ENCODE measurements at regions of chr17 and their contacts with region 1.

Region 1: GRCh38 chr17:75589012-75589918 is 1.7 kb downstream of the MYO15B start:
- DNase-seq: peak; percentile 95 to 97
- H3K4me3 ChIP-seq: peak overlapping the region; percentile 68
- H3K4me3 Mint-ChIP-seq: peak overlapping the region; percentile 69
- H3K27ac Mint-ChIP-seq: no peak overlapping the region
- H3K4me1 ChIP-seq: peaks cover 14% of the 10 kb centered on the region
- H3K4me1 Mint-ChIP-seq: no peaks in the 10 kb centered on the region
- H3K27me3 ChIP-seq: no peaks in the 10 kb centered on the region
- H3K27me3 Mint-ChIP-seq: no peaks in the 10 kb centered on the region
- CTCF ChIP-seq: peak; percentile 60 to 70

Region 2: DNA sequence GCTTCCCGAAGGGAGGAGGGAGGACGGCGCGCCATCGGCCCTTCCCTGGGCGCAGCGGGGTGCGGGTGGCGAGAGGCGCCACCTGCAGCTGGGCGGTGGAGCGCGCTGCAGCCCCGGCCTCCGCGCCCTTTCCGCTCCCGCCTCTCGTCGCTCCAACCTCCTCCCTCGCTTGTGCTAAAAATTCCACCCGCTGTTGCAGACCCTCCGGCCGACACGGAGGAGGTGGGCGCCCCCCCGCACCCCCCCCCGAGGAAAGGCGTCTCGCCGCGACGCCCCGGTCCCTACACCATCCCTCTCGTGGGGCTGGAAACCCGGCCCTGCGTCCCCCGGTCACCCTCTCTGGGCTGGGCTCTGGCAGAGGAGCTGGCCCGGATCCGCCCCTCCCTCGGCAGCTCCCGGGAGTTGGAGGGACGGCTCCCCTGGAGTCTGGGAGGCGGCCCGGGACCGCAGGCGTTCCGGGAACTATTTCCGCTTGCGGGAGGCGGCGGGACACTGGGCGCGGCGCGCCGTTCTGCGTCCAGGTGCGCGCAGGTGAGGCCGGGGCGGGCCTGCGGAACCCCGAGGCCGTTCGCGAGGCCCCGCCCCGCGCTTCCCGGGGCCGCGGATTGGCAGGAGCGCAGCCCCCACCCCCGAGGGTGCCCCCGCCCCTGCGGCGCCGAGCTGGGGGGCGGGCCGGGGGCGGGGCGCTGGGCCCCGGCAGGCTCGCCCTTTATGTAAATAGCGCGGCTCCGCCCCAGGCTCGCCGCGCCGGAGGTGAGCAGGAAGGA is 64.1 kb before region 1 on chr17 and contains the start of gene LLGL2:
- CTCF ChIA-PET with region 1: interaction called, 4 read pairs
- POLR2A ChIA-PET with region 1: interaction called, 3 read pairs
- intact Hi-C with region 1: loop called (anchors 5 kb)
- DNase-seq: peak; percentile 95 to 98
- H3K4me3 ChIP-seq: peak within 1 kb of the TSS; percentile 68
- H3K4me3 Mint-ChIP-seq: peak within 1 kb of the TSS; percentile 92
- H3K27ac Mint-ChIP-seq: peak within 1 kb of the TSS; percentile 76
- H3K4me1 ChIP-seq: peaks cover 5% of the 10 kb centered on the region; the same call in 1 of the 2 replicates
- H3K4me1 Mint-ChIP-seq: peaks cover 16% of the 10 kb centered on the region
- H3K27me3 ChIP-seq: no peaks in the 10 kb centered on the region
- H3K27me3 Mint-ChIP-seq: no peaks in the 10 kb centered on the region
- CTCF ChIP-seq: peak; percentile 47 to 54
- total RNA-seq, gene LLGL2: 165 and 179 TPM in 2 replicates

Region 3: GRCh38 chr17:75536371-75536770 is 52.9 kb before region 1 on chr17:
- CTCF ChIA-PET with region 1: no interaction called
- POLR2A ChIA-PET with region 1: no interaction called
- intact Hi-C with region 1: no loop called
- DNase-seq: peak; percentile 65 to 70
- H3K4me3 ChIP-seq: no peak overlapping the region
- H3K4me3 Mint-ChIP-seq: peak overlapping the region; percentile 7
- H3K27ac Mint-ChIP-seq: peak overlapping the region; percentile 95
- H3K4me1 ChIP-seq: peaks cover 60% of the 10 kb centered on the region
- H3K4me1 Mint-ChIP-seq: peaks cover 55% of the 10 kb centered on the region
- H3K27me3 ChIP-seq: no peaks in the 10 kb centered on the region
- H3K27me3 Mint-ChIP-seq: no peaks in the 10 kb centered on the region
- CTCF ChIP-seq: no peak

Region 4: GRCh38 chr17:75549221-75550138 is 39.8 kb before region 1 on chr17:
- CTCF ChIA-PET with region 1: interaction called, 10 read pairs
- POLR2A ChIA-PET with region 1: no interaction called
- intact Hi-C with region 1: no loop called
- DNase-seq: peak; percentile 69 to 78
- H3K4me3 ChIP-seq: no peak overlapping the region
- H3K4me3 Mint-ChIP-seq: no peak overlapping the region
- H3K27ac Mint-ChIP-seq: peak overlapping the region; percentile 68
- H3K4me1 ChIP-seq: peaks cover 48% of the 10 kb centered on the region
- H3K4me1 Mint-ChIP-seq: peaks cover 22% of the 10 kb centered on the region
- H3K27me3 ChIP-seq: no peaks in the 10 kb centered on the region
- H3K27me3 Mint-ChIP-seq: no peaks in the 10 kb centered on the region
- CTCF ChIP-seq: no peak

Region 5: GRCh38 chr17:75571197-75571873 is 17.9 kb before region 1 on chr17:
- CTCF ChIA-PET with region 1: no interaction called
- POLR2A ChIA-PET with region 1: no interaction called
- intact Hi-C with region 1: no loop called
- DNase-seq: no peak
- H3K4me3 ChIP-seq: no peak overlapping the region
- H3K4me3 Mint-ChIP-seq: no peak overlapping the region
- H3K27ac Mint-ChIP-seq: peak overlapping the region; percentile 7
- H3K4me1 ChIP-seq: peaks cover 3% of the 10 kb centered on the region
- H3K4me1 Mint-ChIP-seq: no peaks in the 10 kb centered on the region
- H3K27me3 ChIP-seq: no peaks in the 10 kb centered on the region
- H3K27me3 Mint-ChIP-seq: no peaks in the 10 kb centered on the region
- CTCF ChIP-seq: no peak

Region 6: GRCh38 chr17:75601057-75602051 is 12.1 kb after region 1 on chr17:
- CTCF ChIA-PET with region 1: interaction called, 13 read pairs
- POLR2A ChIA-PET with region 1: no interaction called
- intact Hi-C with region 1: no loop called
- DNase-seq: peak; percentile 71 to 79
- H3K4me3 ChIP-seq: no peak overlapping the region
- H3K4me3 Mint-ChIP-seq: no peak overlapping the region
- H3K27ac Mint-ChIP-seq: no peak overlapping the region
- H3K4me1 ChIP-seq: no peaks in the 10 kb centered on the region
- H3K4me1 Mint-ChIP-seq: no peaks in the 10 kb centered on the region
- H3K27me3 ChIP-seq: no peaks in the 10 kb centered on the region
- H3K27me3 Mint-ChIP-seq: no peaks in the 10 kb centered on the region
- CTCF ChIP-seq: peak; percentile 57 to 76

Measured in Caco-2 (cell line).